ENCODE measurements at regions of chr11 and their contacts with region 1.

Region 1: GRCh38 chr11:69122642-69123431 is 32.9 kb upstream of the SMIM38 start:
- DNase-seq: peak in 4 of 5 donors; percentile 57 to 87 (median 72)
- ATAC-seq: peak; percentile 85 to 92 (median 90)
- H3K4me3 ChIP-seq: peak overlapping the region in 3 of 12 donors; percentile 3 to 10 (median 4)
- H3K27ac ChIP-seq: peak overlapping the region in 11 of 12 donors; percentile 42 to 75 (median 70)
- H3K4me1 ChIP-seq: peaks cover 10 to 27% (median 18%) of the 10 kb centered on the region in 12 donors
- H3K27me3 ChIP-seq: no peaks in the 10 kb centered on the region
- CTCF ChIP-seq: no peak
- POLR2A ChIP-seq: peak in 1 of 2 donors; percentile 21

Region 2: GRCh38 chr11:68912254-68912653 is 210.6 kb before region 1 on chr11:
- intact Hi-C with region 1: no loop called
- DNase-seq: no peak
- ATAC-seq: no peak
- H3K4me3 ChIP-seq: no peak overlapping the region
- H3K27ac ChIP-seq: no peak overlapping the region
- H3K4me1 ChIP-seq: peaks cover 0 to 8% (median 0%) of the 10 kb centered on the region in 12 donors
- H3K27me3 ChIP-seq: no peaks in the 10 kb centered on the region
- CTCF ChIP-seq: no peak
- POLR2A ChIP-seq: no peak

Region 3: GRCh38 chr11:69088676-69089146 is 34.1 kb before region 1 on chr11:
- intact Hi-C with region 1: no loop called
- DNase-seq: peak; percentile 60 to 78 (median 69)
- ATAC-seq: peak; percentile 59 to 72 (median 63)
- H3K4me3 ChIP-seq: no peak overlapping the region
- H3K27ac ChIP-seq: peak overlapping the region in 7 of 12 donors; percentile 0 to 88 (median 49)
- H3K4me1 ChIP-seq: peaks cover 0 to 36% (median 9%) of the 10 kb centered on the region in 12 donors
- H3K27me3 ChIP-seq: no peaks in the 10 kb centered on the region
- CTCF ChIP-seq: peak; percentile 56 to 80 (median 74)
- POLR2A ChIP-seq: no peak

Region 4: GRCh38 chr11:69211920-69212571 is 89.2 kb after region 1 on chr11:
- intact Hi-C with region 1: loop called in 1 of 10 experiments (anchors 5 kb)
- DNase-seq: no peak
- ATAC-seq: no peak
- H3K4me3 ChIP-seq: no peak overlapping the region
- H3K27ac ChIP-seq: no peak overlapping the region
- H3K4me1 ChIP-seq: peaks cover 0 to 4% (median 0%) of the 10 kb centered on the region in 12 donors
- H3K27me3 ChIP-seq: peaks cover 0 to 9% (median 0%) of the 10 kb centered on the region in 9 donors
- CTCF ChIP-seq: peak in 9 of 12 donors; percentile 17 to 48 (median 25)
- POLR2A ChIP-seq: no peak

Region 5: DNA sequence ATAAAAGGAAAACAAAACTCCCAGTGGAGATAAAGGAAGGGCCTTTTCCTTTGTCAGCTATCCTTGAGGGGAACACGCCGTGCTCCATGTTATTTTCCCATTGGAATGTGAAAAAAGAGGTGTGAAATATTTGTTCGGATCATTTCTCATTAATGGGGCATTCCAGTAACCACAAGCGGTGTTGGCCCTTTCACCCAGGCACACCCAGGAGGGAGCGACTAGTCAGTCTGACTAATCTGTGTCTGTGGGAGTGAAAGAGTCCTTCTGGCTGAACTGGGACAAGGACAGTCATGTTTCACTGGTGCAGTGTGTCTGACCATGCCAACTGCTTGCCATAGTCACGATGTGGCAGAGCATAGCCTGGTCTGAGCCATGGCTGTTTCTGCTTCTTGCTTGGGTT is 158.2 kb after region 1 on chr11:
- intact Hi-C with region 1: loop called in 1 of 10 experiments (anchors 10 kb)
- DNase-seq: peak in 1 of 5 donors; percentile 54
- ATAC-seq: peak; percentile 24 to 85 (median 71)
- H3K4me3 ChIP-seq: no peak overlapping the region
- H3K27ac ChIP-seq: no peak overlapping the region
- H3K4me1 ChIP-seq: peaks cover 0 to 25% (median 10%) of the 10 kb centered on the region in 12 donors
- H3K27me3 ChIP-seq: no peaks in the 10 kb centered on the region
- CTCF ChIP-seq: no peak
- POLR2A ChIP-seq: no peak

Region 6: DNA sequence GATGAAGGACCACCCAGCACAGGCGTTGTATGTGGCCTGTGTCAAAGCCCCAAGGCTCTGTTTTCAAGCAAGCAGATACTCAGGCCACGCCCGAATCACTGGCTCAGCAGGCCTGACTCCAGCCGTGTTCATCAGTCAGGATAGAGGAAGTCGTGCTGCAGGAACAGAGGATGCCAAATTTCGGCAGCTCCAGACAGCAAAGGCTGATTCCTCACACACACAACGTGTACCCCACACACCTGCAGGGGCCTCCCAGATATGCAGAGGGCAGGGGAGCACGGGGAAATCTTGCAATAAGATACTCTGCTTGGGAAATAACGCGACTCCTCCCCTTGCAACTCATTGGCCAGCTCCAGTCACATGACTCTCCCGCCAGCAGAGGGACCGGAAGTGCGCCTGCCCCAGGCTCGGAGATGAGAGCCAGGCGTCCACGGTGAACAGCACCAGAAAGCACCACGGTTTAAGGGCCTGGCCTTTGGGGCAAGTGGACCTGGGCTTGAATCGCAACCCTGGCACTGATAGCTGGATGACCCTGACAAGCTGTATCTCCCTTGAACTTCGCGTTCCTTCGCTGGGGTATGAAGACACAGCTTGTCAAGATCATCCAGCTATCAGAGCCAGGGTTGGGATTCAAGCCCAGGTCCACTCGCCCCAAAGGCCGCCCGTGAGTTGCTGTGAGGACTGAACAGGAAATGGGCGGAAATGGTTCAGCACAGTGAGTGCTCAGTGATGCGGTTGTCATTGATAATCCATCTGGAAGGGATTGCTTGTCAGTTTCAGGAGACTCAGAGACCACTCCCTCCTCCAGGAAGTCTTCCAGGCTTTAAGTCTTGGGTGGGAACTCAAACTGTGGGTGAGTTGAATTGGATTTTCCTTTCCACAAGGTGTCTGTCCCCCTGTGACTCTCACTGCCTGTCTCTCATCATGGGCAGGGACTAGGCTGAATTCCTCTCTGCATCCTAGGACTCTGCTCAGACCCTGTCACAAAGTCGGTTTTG is 259.6 kb after region 1 on chr11:
- intact Hi-C with region 1: no loop called
- DNase-seq: peak in 4 of 5 donors; percentile 38 to 75 (median 54)
- ATAC-seq: peak; percentile 29 to 69 (median 52)
- H3K4me3 ChIP-seq: peak overlapping the region in 7 of 12 donors; percentile 12 to 31 (median 23)
- H3K27ac ChIP-seq: peak overlapping the region in 9 of 12 donors; percentile 9 to 58 (median 48)
- H3K4me1 ChIP-seq: peaks cover 0 to 7% (median 0%) of the 10 kb centered on the region in 12 donors
- H3K27me3 ChIP-seq: no peaks in the 10 kb centered on the region
- CTCF ChIP-seq: no peak
- POLR2A ChIP-seq: peak in 1 of 2 donors; percentile 25

Region 7: GRCh38 chr11:69443138-69443967 is 320.5 kb after region 1 on chr11:
- intact Hi-C with region 1: loop called in 1 of 10 experiments (anchors 5 kb)
- DNase-seq: peak; percentile 94 to 96 (median 95)
- ATAC-seq: peak; percentile 87 to 96 (median 93)
- H3K4me3 ChIP-seq: peak overlapping the region in 10 of 12 donors; percentile 29 to 64 (median 50)
- H3K27ac ChIP-seq: peak overlapping the region; percentile 67 to 95 (median 90)
- H3K4me1 ChIP-seq: peaks cover 3 to 47% (median 33%) of the 10 kb centered on the region in 12 donors
- H3K27me3 ChIP-seq: no peaks in the 10 kb centered on the region
- CTCF ChIP-seq: no peak
- POLR2A ChIP-seq: peak in 1 of 2 donors; percentile 70

Region 8: GRCh38 chr11:69497221-69497787 is 374.5 kb after region 1 on chr11:
- intact Hi-C with region 1: loop called in 1 of 10 experiments (anchors 10 kb)
- DNase-seq: peak; percentile 87 to 96 (median 91)
- ATAC-seq: peak; percentile 95 to 98 (median 97)
- H3K4me3 ChIP-seq: no peak overlapping the region
- H3K27ac ChIP-seq: peak overlapping the region; percentile 64 to 94 (median 88)
- H3K4me1 ChIP-seq: peaks cover 3 to 70% (median 28%) of the 10 kb centered on the region in 12 donors
- H3K27me3 ChIP-seq: no peaks in the 10 kb centered on the region
- CTCF ChIP-seq: peak in 2 of 12 donors; percentile 7 to 15
- POLR2A ChIP-seq: peak in 1 of 2 donors; percentile 23